Activated T-helper 1 cell treated with anti-CD3 and anti-CD28 coated beads, Interleukin-12 subunit alpha, Interleukin-12 subunit beta, Interleukin-2, Interleukin-4 antibody, amounts not matched to agents 30 ng/mL and 10 ng/mL and 1 ng/mL, durations not matched to agents 14 hours and 24 hours and 36 hours (primary cell): ENCODE measurements at regions of chr12 and their contacts with region 1.

Region 1: DNA sequence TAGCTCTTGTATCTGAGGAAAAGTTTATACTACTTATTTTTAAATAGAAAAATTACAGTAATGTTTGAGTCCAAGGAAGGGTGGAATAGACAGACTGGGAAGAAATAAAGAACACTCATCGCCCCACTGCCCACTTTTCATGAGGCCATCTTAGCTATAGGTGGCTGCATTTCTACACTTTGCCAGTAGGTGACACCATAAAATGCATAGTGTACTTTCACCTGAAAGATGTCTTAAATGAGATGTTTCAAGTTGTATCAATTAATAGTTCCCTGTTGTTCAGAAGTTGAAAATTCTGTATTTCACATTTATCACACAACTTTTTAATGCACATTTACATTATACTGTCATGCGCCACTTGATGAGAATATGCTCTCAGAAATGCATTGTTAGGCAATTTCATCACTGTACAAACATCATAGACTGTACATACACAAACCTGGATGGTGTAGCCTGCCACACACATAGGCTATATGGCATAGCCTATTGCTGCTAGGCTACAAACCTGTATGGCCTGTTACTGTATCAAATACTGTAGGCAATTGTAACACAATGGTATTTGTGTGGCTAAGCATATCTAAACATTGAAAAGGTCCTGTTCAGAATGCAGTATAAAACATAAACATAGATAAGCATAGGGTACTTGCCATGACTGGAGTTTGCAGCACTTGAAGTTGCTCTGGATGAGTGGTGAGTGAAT is 27.6 kb downstream of the PMCH start:
- DNase-seq: no peak
- H3K4me3 Mint-ChIP-seq: no peak overlapping the region
- H3K27ac Mint-ChIP-seq: no peak overlapping the region
- H3K4me1 Mint-ChIP-seq: peaks cover 29% of the 10 kb centered on the region
- H3K27me3 Mint-ChIP-seq: no peaks in the 10 kb centered on the region

Region 2: DNA sequence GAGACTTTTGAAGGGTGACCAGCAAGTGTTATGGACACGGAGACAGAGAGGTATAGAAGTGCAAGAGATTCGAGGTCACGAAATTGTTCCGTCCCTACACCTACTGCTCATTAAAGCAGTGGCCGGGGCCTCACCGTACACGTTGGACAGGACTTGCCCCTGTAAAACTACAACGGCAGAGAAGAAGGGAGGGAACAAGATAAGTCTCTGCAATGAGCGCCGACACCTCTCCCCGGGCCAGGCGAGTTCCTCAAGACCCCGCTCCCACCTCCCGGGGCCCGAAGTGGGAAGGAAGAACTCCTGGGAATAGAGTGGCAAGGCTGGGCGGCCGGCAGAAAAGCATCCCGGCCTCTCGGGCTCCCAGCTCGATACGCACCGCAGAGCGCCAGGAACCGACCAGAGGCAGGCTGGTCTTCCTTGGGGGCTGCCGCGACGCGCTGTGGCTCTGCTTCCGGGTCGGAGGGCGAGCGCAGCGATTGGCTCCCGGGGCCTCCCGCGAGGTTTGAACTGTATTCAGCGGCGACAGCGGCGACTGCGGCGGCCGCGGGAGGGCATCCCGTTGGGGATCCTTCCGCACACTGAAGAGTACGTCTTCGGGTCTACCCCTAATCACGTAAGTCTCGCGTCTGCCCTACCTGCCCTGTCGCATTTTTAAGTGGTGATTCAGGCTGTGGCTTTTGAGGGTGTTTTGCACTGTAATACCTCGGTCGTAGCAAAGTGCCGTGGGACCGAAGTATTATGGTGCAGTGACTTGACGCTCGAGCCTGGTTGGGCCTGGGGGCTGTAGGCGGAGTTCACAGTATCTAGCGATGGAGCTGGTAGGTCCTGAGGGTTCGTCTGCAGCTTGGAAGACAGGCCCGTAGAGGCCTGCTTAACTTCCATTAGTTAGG is 50.2 kb before region 1 on chr12 and contains the starts of genes NUP37 and PARPBP:
- intact Hi-C with region 1: loop called (anchors 2 kb)
- DNase-seq: peak; percentile 92
- H3K4me3 Mint-ChIP-seq: peak within 1 kb of the TSS; percentile 92
- H3K27ac Mint-ChIP-seq: peak within 1 kb of the TSS; percentile 95
- H3K4me1 Mint-ChIP-seq: peaks cover 48% of the 10 kb centered on the region
- H3K27me3 Mint-ChIP-seq: no peaks in the 10 kb centered on the region
- total RNA-seq, gene NUP37: 81.5 and 84.1 TPM in 2 replicates
- total RNA-seq, gene PARPBP: 23.5 and 25.1 TPM in 2 replicates

Region 3: DNA sequence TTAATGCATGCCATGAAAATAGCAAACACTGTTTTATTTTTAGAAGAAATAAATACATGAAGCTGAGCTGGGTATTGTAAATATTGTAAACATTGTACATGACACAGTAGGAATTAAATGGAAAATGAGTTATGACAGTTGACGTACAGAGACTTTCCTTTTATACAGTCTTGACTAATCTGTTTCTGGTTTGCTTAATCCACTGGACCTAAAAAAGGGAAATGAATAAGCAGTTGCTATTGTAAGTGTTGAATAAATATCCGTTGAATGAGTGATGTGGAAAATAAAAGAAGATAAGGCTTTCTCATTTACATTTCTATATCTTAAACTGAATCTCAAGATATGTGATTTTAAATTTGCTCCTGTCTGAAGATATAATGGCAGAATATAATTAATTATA is 12.6 kb after region 1 on chr12:
- intact Hi-C with region 1: no loop called
- DNase-seq: no peak
- H3K4me3 Mint-ChIP-seq: no peak overlapping the region
- H3K27ac Mint-ChIP-seq: no peak overlapping the region
- H3K4me1 Mint-ChIP-seq: no peaks in the 10 kb centered on the region
- H3K27me3 Mint-ChIP-seq: no peaks in the 10 kb centered on the region

Region 4: DNA sequence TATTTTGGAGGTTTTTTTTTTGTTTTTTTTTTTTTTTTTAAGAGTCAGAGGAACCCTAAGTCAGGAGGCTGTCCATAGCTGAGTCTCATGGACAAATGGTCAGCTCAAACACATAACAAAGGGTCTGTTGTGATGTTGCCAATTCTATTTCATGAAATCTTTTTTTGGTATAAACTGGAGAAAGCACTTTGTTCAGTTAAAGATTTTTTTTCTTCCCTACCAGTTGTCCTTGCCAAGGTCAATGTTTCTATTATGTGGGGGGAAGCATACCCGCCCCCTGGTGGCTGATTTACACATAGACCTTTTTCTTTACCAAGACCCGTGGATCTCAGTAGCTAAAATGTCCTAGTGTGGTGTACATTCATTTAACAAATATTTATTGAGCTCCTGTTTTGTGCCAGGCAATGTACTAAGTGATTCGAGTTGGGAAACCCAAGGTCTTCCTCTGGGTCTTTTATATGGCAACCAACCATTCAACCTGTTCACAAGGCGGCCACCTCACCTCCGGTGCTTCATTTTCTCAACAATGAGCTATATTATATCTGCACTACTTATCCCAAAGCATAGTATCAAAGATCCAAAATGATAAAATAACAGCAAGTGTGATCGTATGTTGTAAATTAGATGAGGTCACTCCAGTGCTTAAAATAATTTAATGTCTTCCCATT is 532.5 kb after region 1 on chr12:
- intact Hi-C with region 1: loop called (anchors 1 kb)
- DNase-seq: peak; percentile 9
- H3K4me3 Mint-ChIP-seq: no peak overlapping the region
- H3K27ac Mint-ChIP-seq: no peak overlapping the region
- H3K4me1 Mint-ChIP-seq: no peaks in the 10 kb centered on the region
- H3K27me3 Mint-ChIP-seq: peaks cover 10% of the 10 kb centered on the region